Uterus (tissue), 4 donors: ENCODE measurements at regions of chr9 and their contacts with region 1.

Region 1: GRCh38 chr9:38362852-38363593 is 29.5 kb upstream of the ALDH1B1 start:
- DNase-seq: peak; percentile 28 to 48
- H3K4me3 ChIP-seq: no peak overlapping the region
- H3K27ac ChIP-seq: no peak overlapping the region
- H3K4me1 ChIP-seq: no peaks in the 10 kb centered on the region
- H3K27me3 ChIP-seq: no peaks in the 10 kb centered on the region
- CTCF ChIP-seq: peak; percentile 47 to 71 (median 64)
- POLR2A ChIP-seq: no peak

Region 2: DNA sequence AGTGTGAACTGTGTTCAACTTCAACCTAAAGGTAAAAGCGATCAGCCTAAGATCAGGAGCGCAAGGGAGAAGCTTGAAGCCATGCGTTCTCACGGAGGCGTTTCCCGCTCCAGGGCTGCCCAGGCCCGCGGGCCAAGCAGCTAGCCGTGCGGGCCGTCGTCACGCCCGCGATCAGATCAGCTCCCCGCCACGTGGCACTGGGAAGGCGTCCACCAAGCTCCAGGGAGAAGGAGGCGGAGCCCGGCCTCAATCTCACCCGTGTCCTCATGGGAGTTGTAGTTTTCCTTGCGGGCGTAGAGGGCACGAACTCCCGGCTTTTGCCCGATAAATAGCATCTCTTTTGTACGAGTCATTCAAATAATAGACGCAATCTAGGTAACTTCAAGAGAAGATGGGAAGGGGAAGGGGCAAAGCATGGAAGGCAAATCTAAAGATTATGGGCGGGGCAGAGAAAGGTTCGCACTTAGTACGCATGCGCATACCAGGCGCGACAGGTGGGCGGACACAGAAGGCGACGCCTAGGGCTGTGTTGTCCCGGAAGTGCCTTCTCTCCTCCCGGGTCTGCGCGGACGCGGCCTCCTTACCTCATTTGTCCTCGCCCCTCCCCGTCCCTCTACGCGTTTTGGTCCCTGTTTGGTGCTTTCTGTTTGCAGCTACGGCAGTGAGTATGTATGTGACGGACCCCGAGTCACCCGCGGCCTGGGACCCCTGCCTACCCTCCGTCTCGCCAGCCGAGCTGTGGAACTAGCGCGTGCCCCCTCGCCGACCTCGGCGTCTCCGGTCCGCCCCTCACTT is 1283.5 kb before region 1 on chr9:
- intact Hi-C with region 1: no loop called
- DNase-seq: peak; percentile 88 to 90
- H3K4me3 ChIP-seq: peak overlapping the region; percentile 65 to 84
- H3K27ac ChIP-seq: peak overlapping the region; percentile 84 to 86
- H3K4me1 ChIP-seq: peaks cover 0 to 3% of the 10 kb centered on the region in 2 donors
- H3K27me3 ChIP-seq: no peaks in the 10 kb centered on the region
- CTCF ChIP-seq: peak in 1 of 4 experiments; percentile 18
- POLR2A ChIP-seq: peak; percentile 57 to 72

Region 3: DNA sequence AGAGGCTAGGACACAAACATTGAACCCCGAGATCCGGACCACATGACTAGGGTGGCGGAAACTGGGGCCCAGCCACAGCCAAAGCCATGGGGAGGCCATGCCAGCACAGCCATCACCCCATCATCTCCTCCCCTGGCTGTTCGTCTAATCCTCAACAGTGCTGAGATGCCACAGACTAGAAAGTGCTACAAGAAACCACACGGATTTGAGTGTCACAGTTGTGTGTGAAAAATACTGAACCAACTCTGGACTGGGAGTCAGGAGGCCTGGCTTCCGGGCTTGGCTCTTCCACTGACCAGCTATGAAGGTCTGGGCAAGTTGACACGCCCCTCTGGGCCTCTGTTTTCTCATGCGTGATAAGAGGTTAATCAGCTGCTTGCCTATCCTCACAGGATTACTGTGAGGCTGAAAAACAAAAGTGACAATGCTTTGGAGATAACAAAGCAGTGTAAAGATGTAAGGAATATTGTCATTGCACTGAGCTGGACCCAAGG is 255.2 kb before region 1 on chr9:
- intact Hi-C with region 1: loop called (anchors 10 kb)
- DNase-seq: no peak
- H3K4me3 ChIP-seq: no peak overlapping the region
- H3K27ac ChIP-seq: no peak overlapping the region
- H3K4me1 ChIP-seq: no peaks in the 10 kb centered on the region
- H3K27me3 ChIP-seq: no peaks in the 10 kb centered on the region
- CTCF ChIP-seq: no peak
- POLR2A ChIP-seq: no peak

Region 4: GRCh38 chr9:38160613-38161215 is 202.3 kb before region 1 on chr9:
- intact Hi-C with region 1: no loop called
- DNase-seq: peak; percentile 30 to 43
- H3K4me3 ChIP-seq: no peak overlapping the region
- H3K27ac ChIP-seq: no peak overlapping the region
- H3K4me1 ChIP-seq: no peaks in the 10 kb centered on the region
- H3K27me3 ChIP-seq: no peaks in the 10 kb centered on the region
- CTCF ChIP-seq: peak; percentile 40 to 52 (median 47)
- POLR2A ChIP-seq: no peak